ENCODE measurements at regions of chr2 and their contacts with region 1.

Region 1: DNA sequence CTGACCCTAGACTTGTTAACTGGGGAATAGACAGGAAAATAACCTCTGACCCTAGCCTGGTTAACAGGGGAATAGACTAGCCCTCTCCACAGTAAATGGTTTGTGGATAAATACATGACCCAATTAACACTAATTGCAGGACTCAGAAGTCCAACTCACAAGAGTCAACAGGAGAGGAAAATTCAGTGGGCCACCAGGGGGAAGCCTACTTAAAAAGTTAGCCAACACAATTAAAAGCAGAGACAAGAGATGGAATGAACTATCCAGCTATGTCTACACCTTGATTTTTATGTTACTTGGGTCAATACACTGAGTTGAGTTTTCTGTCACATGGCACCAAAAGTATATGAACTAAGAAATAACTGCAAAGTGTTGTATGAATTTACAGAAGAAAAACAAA is 158.8 kb upstream of the SLC39A10 start:
- DNase-seq: peak in 1 of 2 experiments; percentile 13
- H3K4me3 ChIP-seq: no peak overlapping the region
- H3K27ac ChIP-seq: no peak overlapping the region
- H3K4me1 ChIP-seq: no peaks in the 10 kb centered on the region
- H3K27me3 ChIP-seq: no peaks in the 10 kb centered on the region
- CTCF ChIP-seq: peak in 2 of 3 experiments; percentile 51 to 58; a peak in 3 of 4 replicates
- EP300 ChIP-seq: no peak
- POLR2A ChIP-seq: no peak
- RAD21 ChIP-seq: peak; percentile 51 to 70

Region 2: GRCh38 chr2:195482010-195482409 is 16.2 kb before region 1 on chr2:
- CTCF ChIA-PET with region 1: interaction called, 15 read pairs
- POLR2A ChIA-PET with region 1: no interaction called
- DNase-seq: no peak
- H3K4me3 ChIP-seq: no peak overlapping the region
- H3K27ac ChIP-seq: no peak overlapping the region
- H3K4me1 ChIP-seq: no peaks in the 10 kb centered on the region
- H3K27me3 ChIP-seq: peaks cover 0 to 2% (median 0%) of the 10 kb centered on the region in 4 experiments; a peak in 1 of 7 replicates
- CTCF ChIP-seq: no peak
- EP300 ChIP-seq: no peak
- POLR2A ChIP-seq: no peak
- RAD21 ChIP-seq: no peak

Region 3: GRCh38 chr2:195514365-195514764 is 16.2 kb after region 1 on chr2:
- CTCF ChIA-PET with region 1: interaction called, 24 read pairs
- POLR2A ChIA-PET with region 1: no interaction called
- DNase-seq: no peak
- H3K4me3 ChIP-seq: no peak overlapping the region
- H3K27ac ChIP-seq: no peak overlapping the region
- H3K4me1 ChIP-seq: no peaks in the 10 kb centered on the region
- H3K27me3 ChIP-seq: no peaks in the 10 kb centered on the region
- CTCF ChIP-seq: no peak
- EP300 ChIP-seq: no peak
- POLR2A ChIP-seq: no peak
- RAD21 ChIP-seq: no peak

Region 4: GRCh38 chr2:195520671-195521155 is 22.5 kb after region 1 on chr2:
- CTCF ChIA-PET with region 1: interaction called, 13 read pairs
- POLR2A ChIA-PET with region 1: interaction called, 5 read pairs
- DNase-seq: no peak
- H3K4me3 ChIP-seq: no peak overlapping the region
- H3K27ac ChIP-seq: no peak overlapping the region
- H3K4me1 ChIP-seq: no peaks in the 10 kb centered on the region
- H3K27me3 ChIP-seq: no peaks in the 10 kb centered on the region
- CTCF ChIP-seq: no peak
- EP300 ChIP-seq: no peak
- POLR2A ChIP-seq: no peak
- RAD21 ChIP-seq: no peak; a peak in 1 of 4 replicates